ENCODE measurements at regions of chr3 and their contacts with region 1.

Region 1: GRCh38 chr3:192467230-192468140 is 259.9 kb downstream of the FGF12 start:
- DNase-seq: peak in 8 of 10 donors; percentile 51 to 75 (median 56)
- H3K4me3 ChIP-seq: peak overlapping the region in 3 of 59 donors; percentile 13 to 29 (median 19)
- H3K27ac ChIP-seq: peak overlapping the region in 2 of 59 donors; percentile 2 to 11
- H3K27me3 ChIP-seq: peaks cover 0 to 10% (median 0%) of the 10 kb centered on the region in 45 donors
- CTCF ChIP-seq: peak; percentile 71 to 93 (median 86)

Region 2: DNA sequence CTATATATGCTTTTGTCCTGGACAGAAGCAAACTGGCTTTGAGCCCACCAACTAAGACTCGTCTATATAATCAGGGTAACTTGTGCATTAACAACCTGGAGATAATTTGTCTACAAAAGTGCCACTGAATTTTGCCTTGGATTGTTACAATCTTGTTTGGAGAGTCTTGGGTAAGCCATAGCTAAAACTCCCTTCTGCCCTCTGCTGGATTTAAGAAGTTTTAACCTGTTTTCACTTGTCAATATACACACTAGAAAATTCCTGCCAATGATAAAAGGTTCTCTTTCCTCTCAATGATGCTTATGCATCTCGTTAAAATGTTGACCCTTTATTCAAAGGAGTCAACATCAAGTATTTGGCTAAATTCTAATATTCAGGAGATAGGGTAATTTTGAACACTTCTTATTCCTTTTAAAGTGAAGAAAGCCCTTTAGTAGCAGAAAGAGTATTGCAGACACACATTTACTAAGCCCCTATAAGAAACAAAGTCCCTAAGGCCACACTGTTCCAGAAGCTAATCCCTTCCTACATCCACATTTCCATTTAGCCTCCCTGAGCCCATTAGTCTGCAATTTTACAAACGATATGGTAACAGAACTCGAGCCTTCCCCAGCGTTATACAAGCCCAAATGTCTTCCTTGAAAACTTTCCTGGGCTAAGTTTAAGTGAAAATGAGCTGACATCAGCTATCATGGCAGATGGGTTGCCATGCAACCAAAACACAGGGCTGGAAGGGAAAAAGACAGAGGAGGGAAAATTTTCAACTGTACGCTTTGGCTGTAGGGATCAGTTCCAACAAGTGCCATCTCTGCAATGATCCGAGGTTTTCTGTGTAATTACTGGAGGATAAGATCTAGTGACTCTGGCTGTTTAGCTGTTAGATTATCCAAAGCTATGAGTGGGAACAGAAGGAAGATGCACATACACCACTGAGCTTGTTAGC is 335.7 kb after region 1 on chr3:
- intact Hi-C with region 1: loop called (anchors 2 to 10 kb)
- DNase-seq: peak in 1 of 10 donors; percentile 33
- H3K4me3 ChIP-seq: peak overlapping the region in 2 of 59 donors; percentile 6 to 11
- H3K27ac ChIP-seq: peak overlapping the region in 26 of 59 donors; percentile 0 to 67 (median 28)
- H3K27me3 ChIP-seq: no peaks in the 10 kb centered on the region
- CTCF ChIP-seq: peak; percentile 46 to 82 (median 69)

Measured in dorsolateral prefrontal cortex (tissue), 120 donors.